Heart right ventricle (tissue), 16 donors: ENCODE measurements at regions of chr6 and their contacts with region 1.

Region 1: GRCh38 chr6:16761471-16762267 is 409 bp upstream of the ATXN1 start:
- DNase-seq: peak; percentile 84 to 90
- ATAC-seq: peak; percentile 49 to 70 (median 60)
- H3K4me3 ChIP-seq: peak overlapping the region; percentile 67 to 90 (median 86)
- H3K27ac ChIP-seq: peak overlapping the region; percentile 92 to 99 (median 98)
- H3K4me1 ChIP-seq: peaks cover 0 to 57% (median 39%) of the 10 kb centered on the region in 9 donors
- H3K27me3 ChIP-seq: no peaks in the 10 kb centered on the region
- CTCF ChIP-seq: peak in 7 of 9 donors; percentile 8 to 55 (median 30)

Region 2: DNA sequence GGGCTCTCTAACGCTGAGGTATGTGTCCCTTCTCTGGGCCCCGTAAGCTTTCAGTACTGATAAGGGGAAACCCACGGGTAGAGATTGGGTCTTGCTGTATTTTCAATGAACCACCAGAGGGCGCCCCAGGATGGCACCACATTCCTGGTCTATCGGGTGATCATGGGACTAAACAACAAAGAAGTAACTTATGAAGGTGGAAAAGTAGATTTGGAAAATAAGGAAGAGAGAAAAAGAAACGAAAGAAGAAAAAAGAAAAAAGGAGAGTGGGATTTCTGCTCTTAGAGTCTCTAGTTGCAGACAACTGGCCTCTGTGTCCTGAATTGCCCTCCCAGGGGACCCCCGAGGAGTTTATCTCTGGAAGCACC is 429.5 kb before region 1 on chr6:
- intact Hi-C with region 1: loop called (anchors 1 to 10 kb)
- DNase-seq: peak; percentile 56 to 86
- ATAC-seq: peak; percentile 68 to 93 (median 80)
- H3K4me3 ChIP-seq: peak overlapping the region in 2 of 10 donors; percentile 0 to 24
- H3K27ac ChIP-seq: peak overlapping the region in 5 of 10 donors; percentile 1 to 41 (median 31)
- H3K4me1 ChIP-seq: peaks cover 7 to 61% (median 39%) of the 10 kb centered on the region in 9 donors
- H3K27me3 ChIP-seq: no peaks in the 10 kb centered on the region
- CTCF ChIP-seq: peak; percentile 84 to 95 (median 92)

Region 3: DNA sequence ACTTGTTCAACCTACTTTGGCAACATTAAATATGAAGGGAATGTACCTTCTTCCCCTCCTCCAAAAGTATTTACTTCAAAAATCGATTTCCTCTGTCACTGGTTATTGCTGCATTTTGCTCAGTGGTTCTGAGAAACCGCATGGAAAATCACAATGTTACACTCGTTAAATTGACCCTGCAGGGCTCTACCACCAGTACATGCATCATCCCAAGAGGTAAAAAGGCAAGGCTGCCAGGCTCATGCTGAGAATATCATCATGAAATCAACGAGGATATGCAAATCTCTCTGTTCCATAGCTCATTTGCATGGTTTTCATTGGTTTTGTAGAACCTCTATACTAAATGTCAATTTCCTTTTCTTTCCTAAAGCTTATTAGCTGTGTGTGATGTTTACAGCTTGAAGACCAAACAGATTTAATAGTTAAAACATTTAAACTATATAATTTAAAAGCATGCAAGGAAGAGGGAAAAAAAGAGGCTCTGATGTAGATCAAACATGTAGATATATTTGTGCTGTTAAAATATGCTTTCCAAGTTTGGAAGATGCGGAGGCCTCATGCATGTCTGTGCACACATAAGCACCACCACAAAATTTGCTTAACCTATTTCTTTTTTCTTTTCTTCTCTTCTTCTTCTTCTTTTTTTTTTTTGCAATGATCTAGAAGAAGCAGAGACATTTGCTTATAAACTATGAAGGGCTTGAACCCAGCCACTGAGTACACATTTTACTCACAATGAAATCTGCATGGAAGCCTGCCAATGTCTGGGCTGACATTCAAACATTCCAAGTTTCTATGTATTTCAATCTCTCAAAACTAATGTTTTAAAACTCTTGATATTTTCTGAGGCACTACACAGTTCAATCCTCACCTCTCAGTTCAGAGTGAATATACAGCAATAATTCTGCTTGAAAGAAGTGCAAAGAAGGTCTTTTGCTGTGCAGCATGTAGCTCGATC is 329.3 kb before region 1 on chr6:
- intact Hi-C with region 1: loop called in 1 of 10 experiments (anchors 10 kb)
- DNase-seq: peak in 1 of 2 donors; percentile 22
- ATAC-seq: no peak
- H3K4me3 ChIP-seq: no peak overlapping the region
- H3K27ac ChIP-seq: no peak overlapping the region
- H3K4me1 ChIP-seq: peaks cover 5 to 52% (median 31%) of the 10 kb centered on the region in 9 donors
- H3K27me3 ChIP-seq: no peaks in the 10 kb centered on the region
- CTCF ChIP-seq: no peak

Region 4: DNA sequence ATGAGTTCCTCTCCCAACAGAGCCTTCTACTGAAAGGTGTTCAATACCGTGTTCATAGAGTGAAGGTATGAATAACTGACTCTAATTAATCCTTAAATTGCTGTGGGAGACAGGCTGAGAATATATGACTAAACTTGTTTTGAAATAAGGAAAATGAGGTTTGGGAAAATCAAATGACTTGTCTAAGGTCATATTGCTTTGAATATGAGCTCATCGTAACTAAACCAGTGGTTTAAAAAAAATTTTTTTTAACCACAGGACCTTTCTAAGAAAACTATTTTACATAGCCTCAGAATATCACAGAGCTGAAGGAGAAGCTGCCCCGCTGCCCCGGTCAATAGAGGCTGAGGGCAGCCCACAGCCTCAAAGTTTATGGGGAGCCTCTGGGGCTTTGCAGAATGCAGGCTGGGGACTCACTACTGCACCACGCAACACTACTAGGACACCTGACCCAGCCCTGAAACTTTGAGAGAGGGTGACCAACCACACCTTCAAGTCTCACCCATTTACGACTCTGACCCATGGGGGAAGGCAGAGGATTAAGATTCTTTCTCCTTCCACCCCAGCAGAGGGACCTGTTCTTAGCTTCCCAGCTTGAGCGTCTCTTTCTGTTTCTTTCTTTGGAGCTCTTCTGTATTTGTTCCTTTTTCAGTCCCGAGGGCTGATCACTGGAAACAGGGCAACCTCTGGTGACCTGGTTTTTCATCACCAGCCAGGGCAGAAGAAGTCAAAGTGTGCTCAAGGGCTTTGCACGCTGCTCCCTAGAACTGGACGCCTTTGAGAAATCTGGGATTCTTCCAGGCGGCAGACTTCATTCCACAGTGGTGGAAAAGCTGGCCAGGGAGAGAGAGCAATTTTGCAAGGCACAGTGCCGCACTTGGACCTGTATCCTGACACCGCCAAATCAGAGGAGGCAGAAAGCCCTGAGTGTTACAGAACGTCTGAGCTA is 220.6 kb before region 1 on chr6:
- intact Hi-C with region 1: loop called in 5 of 10 experiments (anchors 5 to 10 kb)
- DNase-seq: peak; percentile 24 to 29
- ATAC-seq: peak; percentile 36 to 84 (median 56)
- H3K4me3 ChIP-seq: peak overlapping the region in 1 of 10 donors; percentile 15
- H3K27ac ChIP-seq: peak overlapping the region; percentile 15 to 74 (median 60)
- H3K4me1 ChIP-seq: peaks cover 9 to 49% (median 29%) of the 10 kb centered on the region in 9 donors
- H3K27me3 ChIP-seq: no peaks in the 10 kb centered on the region
- CTCF ChIP-seq: peak in 5 of 9 donors; percentile 18 to 51 (median 35)

Region 5: DNA sequence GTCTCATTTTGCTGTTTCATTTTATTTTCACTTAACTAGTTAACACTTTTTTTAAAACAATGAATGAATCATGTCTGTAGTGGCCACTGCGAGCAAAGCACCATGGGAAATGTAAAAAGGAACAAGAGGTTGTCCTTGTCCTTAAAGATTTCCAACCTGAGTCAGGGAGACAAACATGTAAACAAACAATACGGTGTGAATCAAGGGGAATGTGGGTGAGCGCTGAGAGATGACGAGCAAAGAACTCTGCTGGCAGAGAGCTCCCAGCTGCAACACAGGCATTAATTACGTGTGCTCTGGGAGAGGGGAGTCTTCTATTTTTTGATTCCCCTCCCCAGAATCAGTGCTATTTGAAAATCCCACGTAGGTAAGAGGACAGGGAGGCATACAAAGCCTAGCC is 84.7 kb before region 1 on chr6:
- intact Hi-C with region 1: loop called in 3 of 10 experiments (anchors 5 to 10 kb)
- DNase-seq: no peak
- ATAC-seq: peak in 7 of 8 donors; percentile 38 to 90 (median 68)
- H3K4me3 ChIP-seq: peak overlapping the region in 5 of 10 donors; percentile 4 to 30 (median 10)
- H3K27ac ChIP-seq: peak overlapping the region in 9 of 10 donors; percentile 12 to 73 (median 51)
- H3K4me1 ChIP-seq: peaks cover 0 to 65% (median 37%) of the 10 kb centered on the region in 9 donors
- H3K27me3 ChIP-seq: no peaks in the 10 kb centered on the region
- CTCF ChIP-seq: no peak

Region 6: GRCh38 chr6:16694781-16695578 is 66.7 kb before region 1 on chr6:
- intact Hi-C with region 1: no loop called
- DNase-seq: no peak
- ATAC-seq: peak in 2 of 8 donors; percentile 24 to 67
- H3K4me3 ChIP-seq: no peak overlapping the region
- H3K27ac ChIP-seq: peak overlapping the region in 1 of 10 donors; percentile 76
- H3K4me1 ChIP-seq: peaks cover 3 to 82% (median 20%) of the 10 kb centered on the region in 9 donors
- H3K27me3 ChIP-seq: no peaks in the 10 kb centered on the region
- CTCF ChIP-seq: no peak

Region 7: DNA sequence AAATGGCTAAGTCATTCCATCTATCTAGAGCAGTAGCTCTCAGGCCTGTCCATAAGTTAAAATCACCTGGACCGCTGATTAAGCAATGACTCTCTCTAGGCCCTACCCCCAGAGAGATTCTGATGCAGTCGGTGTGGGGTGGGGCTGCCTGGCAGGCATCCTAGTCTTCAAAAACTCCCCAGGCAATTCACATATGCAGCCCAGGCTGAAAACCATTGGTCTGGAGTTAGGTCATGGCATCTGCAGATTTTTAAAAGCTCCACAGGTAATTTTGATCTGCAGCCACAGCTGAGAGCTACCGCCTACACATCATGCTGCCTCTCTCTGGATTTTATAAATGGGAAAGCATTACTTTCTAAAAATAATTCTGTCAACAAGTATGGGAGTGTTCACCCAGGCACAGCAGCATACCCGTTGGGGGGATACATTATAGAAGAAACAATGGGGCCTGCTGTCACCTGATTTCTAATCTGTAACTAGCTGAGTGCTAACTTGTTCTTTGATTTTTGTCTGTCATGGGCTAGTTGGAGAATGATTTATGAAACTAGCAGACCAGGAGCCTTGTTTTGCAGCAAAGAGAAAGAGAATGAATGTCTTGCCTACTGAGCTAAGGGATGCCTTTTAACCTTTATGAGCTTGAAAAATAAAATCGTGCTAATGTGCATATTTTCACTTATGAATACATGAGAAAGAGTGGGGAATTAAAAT is 43.7 kb after region 1 on chr6:
- intact Hi-C with region 1: no loop called
- DNase-seq: no peak
- ATAC-seq: peak in 7 of 8 donors; percentile 17 to 50 (median 40)
- H3K4me3 ChIP-seq: no peak overlapping the region
- H3K27ac ChIP-seq: peak overlapping the region in 7 of 10 donors; percentile 49 to 87 (median 83)
- H3K4me1 ChIP-seq: peaks cover 3 to 56% (median 38%) of the 10 kb centered on the region in 9 donors
- H3K27me3 ChIP-seq: no peaks in the 10 kb centered on the region
- CTCF ChIP-seq: no peak

Region 8: DNA sequence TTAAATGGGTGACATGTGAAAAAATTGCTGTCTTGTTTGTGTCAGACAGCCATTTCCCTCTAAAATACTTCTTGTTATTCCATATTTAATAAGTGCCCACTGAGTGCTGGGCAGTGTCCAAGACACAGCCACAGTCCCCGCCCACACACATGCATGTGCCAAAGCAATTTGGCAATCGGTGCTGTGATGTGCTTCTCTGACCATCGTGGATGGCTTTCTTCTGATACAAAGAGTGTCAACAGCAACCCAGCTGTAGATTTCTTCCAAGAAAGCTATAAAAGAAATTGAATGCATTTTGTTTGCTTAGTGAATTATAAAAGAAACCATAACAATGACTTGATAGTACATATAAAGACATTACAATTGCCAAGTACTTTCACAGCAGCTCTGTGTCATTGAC is 140.1 kb after region 1 on chr6:
- intact Hi-C with region 1: no loop called
- DNase-seq: peak; percentile 11 to 42
- ATAC-seq: peak in 3 of 8 donors; percentile 46 to 69 (median 58)
- H3K4me3 ChIP-seq: no peak overlapping the region
- H3K27ac ChIP-seq: no peak overlapping the region
- H3K4me1 ChIP-seq: peaks cover 0 to 30% (median 0%) of the 10 kb centered on the region in 9 donors
- H3K27me3 ChIP-seq: peaks cover 0 to 3% (median 0%) of the 10 kb centered on the region in 7 donors
- CTCF ChIP-seq: no peak

Region 9: GRCh38 chr6:17086469-17086868 is 324.8 kb after region 1 on chr6:
- intact Hi-C with region 1: loop called in 7 of 10 experiments (anchors 1 to 10 kb)
- DNase-seq: peak in 1 of 2 donors; percentile 64
- ATAC-seq: peak; percentile 49 to 86 (median 74)
- H3K4me3 ChIP-seq: no peak overlapping the region
- H3K27ac ChIP-seq: no peak overlapping the region
- H3K4me1 ChIP-seq: peaks cover 0 to 11% (median 0%) of the 10 kb centered on the region in 9 donors
- H3K27me3 ChIP-seq: peaks cover 0 to 9% (median 0%) of the 10 kb centered on the region in 7 donors
- CTCF ChIP-seq: peak; percentile 41 to 78 (median 71)